ENCODE measurements at regions of chr17 and their contacts with region 1.

Region 1: DNA sequence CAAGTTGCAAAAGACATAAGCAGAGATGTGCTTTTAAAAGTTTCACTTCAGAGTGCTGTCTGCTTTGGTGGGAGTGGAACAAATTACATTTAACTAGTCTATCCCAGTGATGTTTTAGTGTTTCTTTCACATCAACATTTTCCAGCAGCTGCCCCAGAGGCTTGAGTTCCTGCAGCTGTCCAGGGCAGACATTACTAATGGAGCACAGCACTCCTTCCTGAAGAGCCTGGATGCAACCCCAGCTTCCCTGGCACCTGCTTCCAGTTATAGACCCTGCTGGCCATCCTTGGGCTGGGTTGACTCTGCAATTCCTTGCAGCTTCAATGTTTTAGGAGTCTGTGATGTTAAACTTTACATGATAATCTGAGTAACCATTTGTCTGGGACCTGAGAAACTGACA is 61.4 kb upstream of the PIRT start:
- DNase-seq: no peak
- ATAC-seq: no peak
- H3K4me3 Mint-ChIP-seq: no peak overlapping the region
- H3K27ac Mint-ChIP-seq: no peak overlapping the region
- H3K4me1 Mint-ChIP-seq: no peaks in the 10 kb centered on the region
- H3K27me3 Mint-ChIP-seq: no peaks in the 10 kb centered on the region
- CTCF ChIP-seq: no peak

Region 2: GRCh38 chr17:10992106-10992880 is 93.0 kb after region 1 on chr17:
- CTCF ChIA-PET with region 1: no interaction called
- POLR2A ChIA-PET with region 1: no interaction called
- intact Hi-C with region 1: loop called (anchors 10 kb)
- DNase-seq: no peak
- ATAC-seq: no peak
- H3K4me3 Mint-ChIP-seq: no peak overlapping the region
- H3K27ac Mint-ChIP-seq: no peak overlapping the region
- H3K4me1 Mint-ChIP-seq: no peaks in the 10 kb centered on the region
- H3K27me3 Mint-ChIP-seq: peaks cover 12% of the 10 kb centered on the region
- CTCF ChIP-seq: no peak